ENCODE measurements at regions of chr18 and their contacts with region 1.

Region 1: GRCh38 chr18:74183130-74183529 is 34.8 kb downstream of the TIMM21 start:
- DNase-seq: no peak
- ATAC-seq: peak; percentile 76
- H3K4me3 ChIP-seq: no peak overlapping the region
- H3K27ac ChIP-seq: no peak overlapping the region
- H3K4me1 ChIP-seq: peaks cover 10% of the 10 kb centered on the region
- H3K27me3 ChIP-seq: no peaks in the 10 kb centered on the region
- CTCF ChIP-seq: no peak
- POLR2A ChIP-seq: no peak

Region 2: GRCh38 chr18:73879766-73880165 is 303.4 kb before region 1 on chr18:
- intact Hi-C with region 1: no loop called
- DNase-seq: no peak
- ATAC-seq: no peak
- H3K4me3 ChIP-seq: no peak overlapping the region
- H3K27ac ChIP-seq: no peak overlapping the region
- H3K4me1 ChIP-seq: no peaks in the 10 kb centered on the region
- H3K27me3 ChIP-seq: no peaks in the 10 kb centered on the region
- CTCF ChIP-seq: no peak
- POLR2A ChIP-seq: no peak

Region 3: GRCh38 chr18:74551936-74552555 is 368.9 kb after region 1 on chr18:
- intact Hi-C with region 1: loop called (anchors 10 kb)
- DNase-seq: peak; percentile 92 to 95 (median 92)
- ATAC-seq: peak; percentile 97
- H3K4me3 ChIP-seq: no peak overlapping the region
- H3K27ac ChIP-seq: peak overlapping the region in 1 of 4 donors; percentile 4
- H3K4me1 ChIP-seq: peaks cover 10% of the 10 kb centered on the region
- H3K27me3 ChIP-seq: no peaks in the 10 kb centered on the region
- CTCF ChIP-seq: peak; percentile 40 to 91 (median 85)
- POLR2A ChIP-seq: no peak